ENCODE measurements at regions of chr11 and their contacts with region 1.

Region 1: GRCh38 chr11:32435942-32436750 is 807 bp upstream of the WT1 start:
- DNase-seq: no peak
- H3K4me3 Mint-ChIP-seq: no peak overlapping the region
- H3K27ac Mint-ChIP-seq: no peak overlapping the region
- H3K4me1 Mint-ChIP-seq: no peaks in the 10 kb centered on the region
- H3K27me3 Mint-ChIP-seq: peaks cover 47% of the 10 kb centered on the region
- CTCF ChIP-seq: no peak

Region 2: DNA sequence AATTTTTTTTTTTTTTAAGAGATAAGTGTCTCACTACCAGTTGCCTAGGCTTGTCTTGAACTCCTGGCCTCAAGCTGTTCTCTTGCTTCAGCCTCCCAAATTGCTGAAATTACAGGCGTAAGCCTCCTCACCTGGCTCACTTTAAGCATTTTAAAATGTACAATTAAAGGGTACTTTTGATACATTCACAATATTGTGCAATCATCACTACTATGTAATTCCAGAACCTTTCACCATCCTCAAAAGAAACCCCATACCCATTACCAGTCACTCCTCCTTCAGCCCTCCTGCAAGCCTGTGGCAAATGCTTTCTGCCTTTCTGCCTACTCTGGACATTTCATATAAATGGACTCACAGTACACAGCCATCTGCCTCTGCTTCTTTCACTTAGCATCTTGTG is 33.6 kb after region 1 on chr11:
- CTCF ChIA-PET with region 1: interaction called, 11 read pairs
- intact Hi-C with region 1: no loop called
- DNase-seq: no peak
- H3K4me3 Mint-ChIP-seq: no peak overlapping the region
- H3K27ac Mint-ChIP-seq: no peak overlapping the region
- H3K4me1 Mint-ChIP-seq: no peaks in the 10 kb centered on the region
- H3K27me3 Mint-ChIP-seq: peaks cover 30% of the 10 kb centered on the region
- CTCF ChIP-seq: no peak

Measured in Calu3 (cell line).